ENCODE measurements at regions of chr10 and their contacts with region 1.

Region 1: DNA sequence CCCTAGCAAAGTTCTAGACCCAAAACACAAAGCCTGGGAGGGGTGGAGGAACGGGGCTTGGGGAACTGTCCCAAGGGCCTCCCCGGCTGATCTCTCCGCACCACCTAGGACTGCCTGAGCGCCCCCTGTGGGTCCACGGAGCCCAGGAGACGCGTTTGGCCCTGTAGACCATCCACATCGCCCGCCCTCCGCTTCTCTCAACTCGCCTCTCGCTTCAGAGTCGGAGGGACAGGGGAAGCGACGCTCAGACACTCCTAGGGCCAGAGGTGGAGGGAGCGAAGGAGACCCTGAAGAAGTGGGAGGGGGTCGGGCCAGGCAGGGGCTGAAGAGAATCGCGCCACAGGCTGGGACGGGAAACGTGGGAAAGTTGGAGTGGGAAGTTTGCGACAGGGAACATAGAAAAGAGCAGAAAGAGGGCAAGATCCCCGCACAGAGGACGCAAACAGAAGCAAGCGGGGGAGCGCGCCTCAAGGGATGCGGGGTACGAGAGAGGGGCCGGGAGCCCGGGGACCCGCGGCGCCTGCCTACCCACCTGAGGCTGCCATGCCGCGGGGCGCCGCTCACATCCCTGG is 378 bp downstream of the PIK3AP1 start:
- DNase-seq: no peak
- ATAC-seq: peak; percentile 82
- H3K4me3 ChIP-seq: peak overlapping the region; percentile 97
- H3K27ac ChIP-seq: peak overlapping the region; percentile 71
- H3K4me1 ChIP-seq: peaks cover 34% of the 10 kb centered on the region
- H3K27me3 ChIP-seq: no peaks in the 10 kb centered on the region
- CTCF ChIP-seq: peak; percentile 89 to 96 (median 89)
- EP300 ChIP-seq: no peak; a peak in 1 of 4 replicates
- POLR2A ChIP-seq: no peak
- RAD21 ChIP-seq: peak; percentile 79

Region 2: DNA sequence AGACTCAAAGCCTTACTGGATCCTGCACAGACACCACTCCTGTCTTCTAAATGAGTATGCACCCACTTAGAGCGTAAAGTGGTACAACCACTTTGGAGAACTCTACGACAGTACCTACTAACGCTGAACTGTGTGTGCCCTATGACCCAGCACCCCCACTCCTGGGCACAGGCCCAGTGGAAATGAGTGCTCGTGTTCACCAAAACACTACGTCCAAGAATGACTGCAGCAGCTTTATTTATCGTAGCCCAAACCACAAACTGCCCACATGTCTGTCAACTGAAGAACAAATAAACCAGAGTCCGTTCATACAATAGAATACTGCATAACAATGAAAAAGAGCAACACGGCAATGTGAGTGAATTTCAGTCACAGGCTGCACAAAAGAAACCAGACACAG is 241.6 kb before region 1 on chr10:
- CTCF ChIA-PET with region 1: no interaction called
- POLR2A ChIA-PET with region 1: no interaction called
- RAD21 ChIA-PET with region 1: no interaction called
- SMC1A ChIA-PET with region 1: no interaction called
- in situ Hi-C with region 1: no loop called
- intact Hi-C with region 1: no loop called
- DNase-seq: no peak
- ATAC-seq: no peak
- H3K4me3 ChIP-seq: no peak overlapping the region
- H3K27ac ChIP-seq: no peak overlapping the region
- H3K4me1 ChIP-seq: no peaks in the 10 kb centered on the region
- H3K27me3 ChIP-seq: peaks cover 0 to 2% of the 10 kb centered on the region in 2 experiments; a peak in 2 of 4 replicates
- CTCF ChIP-seq: no peak
- EP300 ChIP-seq: no peak
- POLR2A ChIP-seq: no peak
- RAD21 ChIP-seq: no peak

Region 3: DNA sequence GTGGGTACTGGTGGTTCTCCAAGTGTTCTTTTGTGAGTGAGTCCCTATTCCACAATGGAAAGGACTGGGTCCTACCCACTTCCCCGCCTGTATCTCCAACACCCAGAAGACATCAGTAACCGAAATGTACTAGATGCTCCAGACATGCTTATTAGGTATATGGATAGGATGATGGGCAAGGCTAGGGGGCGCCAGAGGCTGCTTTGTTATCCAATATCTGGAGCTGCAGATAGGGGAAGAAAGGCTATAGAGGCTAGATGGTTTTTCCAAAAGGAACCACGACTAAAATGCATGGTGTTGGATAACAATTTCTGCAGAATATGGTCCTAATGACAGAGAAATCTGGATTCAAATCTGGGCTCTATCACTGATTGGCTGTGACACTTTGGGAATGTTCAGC is 77.0 kb before region 1 on chr10:
- CTCF ChIA-PET with region 1: interaction called, 98 read pairs
- POLR2A ChIA-PET with region 1: interaction called, 25 read pairs
- RAD21 ChIA-PET with region 1: interaction called, 60 read pairs
- SMC1A ChIA-PET with region 1: interaction called, 77 read pairs
- in situ Hi-C with region 1: loop called (anchors 10 kb)
- intact Hi-C with region 1: loop called (anchors 1 kb)
- DNase-seq: no peak
- ATAC-seq: peak; percentile 78
- H3K4me3 ChIP-seq: no peak overlapping the region
- H3K27ac ChIP-seq: no peak overlapping the region
- H3K4me1 ChIP-seq: peaks cover 34% of the 10 kb centered on the region
- H3K27me3 ChIP-seq: no peaks in the 10 kb centered on the region
- CTCF ChIP-seq: peak; percentile 74 to 94 (median 85)
- EP300 ChIP-seq: no peak
- POLR2A ChIP-seq: no peak
- RAD21 ChIP-seq: peak; percentile 92

Region 4: DNA sequence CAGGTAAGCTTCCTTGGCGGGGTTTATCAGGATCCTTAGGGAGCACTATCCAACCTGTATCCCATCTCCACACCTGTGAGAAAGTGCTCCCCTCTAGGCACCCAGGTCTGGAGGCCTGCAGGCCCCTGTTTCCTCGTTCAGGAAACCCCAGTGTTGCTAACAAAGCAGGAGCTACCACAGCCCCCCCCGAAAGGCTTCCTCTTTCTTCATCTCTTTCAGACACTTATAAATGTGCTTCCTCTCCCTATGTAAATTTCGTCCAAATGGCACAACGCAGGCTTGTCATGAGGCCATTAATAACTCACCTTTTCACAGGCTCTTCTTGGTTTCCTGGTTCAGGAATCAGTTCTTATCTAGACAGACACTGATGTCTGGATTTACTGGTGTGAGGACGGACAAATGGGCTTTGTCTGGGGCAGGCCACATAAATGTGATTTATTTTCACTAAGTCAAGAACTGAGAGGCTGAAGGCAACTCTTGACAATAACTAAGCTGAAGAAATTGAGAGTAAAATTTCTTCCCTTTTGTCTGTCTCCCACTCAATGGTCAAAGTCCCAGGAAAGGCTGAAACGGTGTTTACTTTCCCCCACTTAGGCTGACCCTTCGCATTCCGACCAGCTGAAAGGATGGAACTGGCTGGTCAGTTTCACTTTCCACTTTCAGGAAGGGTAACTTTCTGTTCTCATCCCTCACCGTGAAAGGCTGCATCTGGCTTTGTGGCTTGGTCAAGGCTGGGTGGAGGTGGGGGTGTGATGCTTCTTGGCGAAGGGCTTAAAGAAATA is 46.4 kb before region 1 on chr10:
- CTCF ChIA-PET with region 1: interaction called, 15 read pairs
- POLR2A ChIA-PET with region 1: interaction called, 3 read pairs
- RAD21 ChIA-PET with region 1: interaction called, 25 read pairs
- SMC1A ChIA-PET with region 1: interaction called, 29 read pairs
- in situ Hi-C with region 1: no loop called
- intact Hi-C with region 1: no loop called
- DNase-seq: peak; percentile 67
- ATAC-seq: peak; percentile 80
- H3K4me3 ChIP-seq: peak overlapping the region; percentile 54; the same call in 1 of the 2 replicates
- H3K27ac ChIP-seq: peak overlapping the region; percentile 40
- H3K4me1 ChIP-seq: peaks cover 79% of the 10 kb centered on the region
- H3K27me3 ChIP-seq: no peaks in the 10 kb centered on the region
- CTCF ChIP-seq: no peak
- EP300 ChIP-seq: peak in 1 of 2 experiments; percentile 8; a peak in 1 of 4 replicates
- POLR2A ChIP-seq: no peak
- RAD21 ChIP-seq: no peak

Region 5: DNA sequence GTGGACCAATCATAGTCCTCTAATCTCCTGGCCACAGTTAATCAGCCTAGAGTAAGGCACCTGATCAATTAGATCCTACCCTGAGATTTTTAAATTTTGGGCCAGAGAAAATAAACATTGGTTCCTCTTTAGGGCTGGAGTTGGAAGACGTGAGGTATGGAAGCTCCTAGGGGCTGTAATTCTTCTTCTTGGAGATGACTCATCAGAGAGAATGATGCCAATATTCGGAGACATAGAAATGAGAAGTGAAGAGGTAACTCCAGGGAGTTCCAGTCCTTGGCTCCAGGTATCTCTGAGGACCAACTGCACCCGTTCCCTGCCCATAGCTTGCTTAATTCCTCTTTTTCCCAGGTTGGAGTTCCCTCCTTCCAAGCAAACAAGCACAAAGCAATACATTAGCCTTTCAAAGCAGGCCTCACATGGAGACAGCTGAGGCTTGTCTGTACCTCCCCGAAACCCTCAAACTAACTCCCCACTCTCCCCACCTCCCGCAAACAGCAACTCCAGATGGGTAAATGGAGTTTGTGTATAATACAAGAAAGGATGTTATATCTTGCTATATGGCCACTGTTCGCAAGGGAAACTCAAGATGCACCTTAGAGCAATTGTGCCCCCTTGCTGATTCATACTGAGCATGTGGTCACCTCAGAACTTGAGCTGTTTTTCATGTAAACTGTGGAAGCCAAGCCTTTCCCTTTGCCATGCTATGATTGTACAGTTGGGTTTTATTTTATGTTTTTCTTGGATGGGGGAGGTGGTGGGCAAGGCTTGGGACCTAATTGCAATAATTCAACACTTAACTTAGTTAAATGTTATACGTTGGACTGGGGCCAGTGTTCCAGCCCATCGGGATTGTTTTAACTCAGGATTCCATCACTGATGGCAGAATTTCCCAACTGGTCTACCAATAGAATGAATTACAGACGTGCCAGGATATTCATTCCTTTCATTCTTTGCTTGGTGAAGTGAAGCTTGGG is 28.9 kb before region 1 on chr10:
- CTCF ChIA-PET with region 1: interaction called, 17 read pairs
- POLR2A ChIA-PET with region 1: interaction called, 15 read pairs
- RAD21 ChIA-PET with region 1: interaction called, 176 read pairs
- SMC1A ChIA-PET with region 1: interaction called, 68 read pairs
- in situ Hi-C with region 1: no loop called
- intact Hi-C with region 1: no loop called
- DNase-seq: no peak
- ATAC-seq: peak; percentile 64
- H3K4me3 ChIP-seq: no peak overlapping the region
- H3K27ac ChIP-seq: no peak overlapping the region
- H3K4me1 ChIP-seq: peaks cover 31% of the 10 kb centered on the region
- H3K27me3 ChIP-seq: no peaks in the 10 kb centered on the region
- CTCF ChIP-seq: peak in 1 of 3 experiments; percentile 35; a peak in 2 of 6 replicates
- EP300 ChIP-seq: no peak
- POLR2A ChIP-seq: no peak
- RAD21 ChIP-seq: peak; percentile 71

Region 6: DNA sequence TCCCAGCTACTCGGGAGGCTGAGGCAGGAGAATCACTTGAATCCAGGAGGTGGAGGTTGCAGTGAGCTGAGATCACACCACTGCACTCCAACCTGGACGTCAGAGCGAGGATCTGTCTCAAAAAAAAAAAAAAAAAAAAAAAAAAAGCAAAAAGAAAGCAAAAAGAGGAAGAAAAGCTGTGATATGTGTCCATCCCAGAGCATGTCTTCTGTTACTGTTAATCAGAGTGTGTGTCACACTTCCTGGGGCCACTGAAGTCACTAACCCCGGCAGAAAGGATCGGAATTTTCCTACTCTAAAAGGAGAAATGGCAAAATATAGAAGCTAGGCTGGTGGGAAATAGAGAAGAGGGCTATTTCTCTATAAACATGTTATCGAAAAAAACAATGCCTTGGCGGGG is 11.5 kb before region 1 on chr10:
- CTCF ChIA-PET with region 1: interaction called, 133 read pairs
- POLR2A ChIA-PET with region 1: interaction called, 138 read pairs
- RAD21 ChIA-PET with region 1: interaction called, 75 read pairs
- SMC1A ChIA-PET with region 1: interaction called, 233 read pairs
- in situ Hi-C with region 1: no loop called
- intact Hi-C with region 1: no loop called
- DNase-seq: no peak
- ATAC-seq: peak; percentile 43
- H3K4me3 ChIP-seq: peak overlapping the region; percentile 62; the same call in 1 of the 2 replicates
- H3K27ac ChIP-seq: peak overlapping the region; percentile 61
- H3K4me1 ChIP-seq: peaks cover 37% of the 10 kb centered on the region
- H3K27me3 ChIP-seq: no peaks in the 10 kb centered on the region
- CTCF ChIP-seq: no peak
- EP300 ChIP-seq: no peak
- POLR2A ChIP-seq: no peak
- RAD21 ChIP-seq: no peak

Region 7: GRCh38 chr10:96831867-96832720 is 112.2 kb after region 1 on chr10 and contains the start of gene LCOR:
- CTCF ChIA-PET with region 1: interaction called, 3 read pairs
- POLR2A ChIA-PET with region 1: no interaction called
- RAD21 ChIA-PET with region 1: no interaction called
- SMC1A ChIA-PET with region 1: interaction called, 3 read pairs
- in situ Hi-C with region 1: no loop called
- intact Hi-C with region 1: loop called (anchors 2 kb)
- DNase-seq: no peak
- ATAC-seq: peak; percentile 64
- H3K4me3 ChIP-seq: peak within 1 kb of the TSS; percentile 100
- H3K27ac ChIP-seq: peak within 1 kb of the TSS; percentile 80
- H3K4me1 ChIP-seq: peaks cover 12% of the 10 kb centered on the region
- H3K27me3 ChIP-seq: no peaks in the 10 kb centered on the region
- CTCF ChIP-seq: no peak
- EP300 ChIP-seq: no peak
- POLR2A ChIP-seq: peak; percentile 90
- RAD21 ChIP-seq: no peak
- polyA plus RNA-seq, gene LCOR: 1.6 to 6.1 TPM